CD8-positive, alpha-beta memory T cell (primary cell): ENCODE measurements at regions of chr20 and their contacts with region 1.

Region 1: GRCh38 chr20:52083627-52084232 is 107.8 kb downstream of the ZFP64 start:
- DNase-seq: peak in 4 of 5 donors; percentile 32 to 68 (median 36)
- H3K4me3 ChIP-seq: no peak overlapping the region
- H3K4me3 Mint-ChIP-seq: no peak overlapping the region
- H3K27ac ChIP-seq: no peak overlapping the region
- H3K27ac Mint-ChIP-seq: peak overlapping the region in 3 of 8 donors; percentile 19 to 78 (median 44)
- H3K4me1 ChIP-seq: no peaks in the 10 kb centered on the region
- H3K4me1 Mint-ChIP-seq: peaks cover 19 to 28% (median 24%) of the 10 kb centered on the region in 3 donors
- H3K27me3 ChIP-seq: no peaks in the 10 kb centered on the region
- H3K27me3 Mint-ChIP-seq: no peaks in the 10 kb centered on the region

Region 2: DNA sequence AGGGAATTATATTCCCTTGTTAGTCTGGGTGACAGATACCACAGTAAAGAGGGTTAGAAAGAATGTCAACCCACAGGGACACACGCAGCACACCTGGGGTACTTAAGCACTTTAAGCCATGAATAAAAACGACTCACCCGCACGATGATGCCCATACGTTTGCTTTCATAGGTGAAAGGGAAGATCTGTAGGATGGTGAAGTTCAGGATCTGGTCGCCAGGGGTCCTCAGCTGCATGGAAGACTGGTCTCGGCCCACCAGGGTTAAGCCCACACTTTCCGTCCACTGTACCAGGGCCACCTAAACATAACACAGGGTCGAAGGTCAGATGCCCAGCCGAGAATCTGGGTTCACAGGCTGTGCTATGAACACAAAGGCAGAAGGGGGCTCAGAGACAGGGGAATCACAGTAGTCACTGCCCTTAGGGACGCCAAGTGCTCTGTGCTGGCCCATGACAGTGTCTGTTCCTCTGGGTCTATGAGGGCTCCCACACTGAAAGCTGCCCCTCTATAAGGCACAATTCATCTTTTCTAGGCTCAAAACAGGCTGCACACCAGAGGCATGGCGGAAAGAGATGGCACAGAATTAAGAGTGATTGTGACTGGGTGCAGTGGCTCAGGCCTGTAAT is 444.4 kb before region 1 on chr20:
- CTCF ChIA-PET with region 1: interaction called, 16 read pairs
- POLR2A ChIA-PET with region 1: no interaction called
- DNase-seq: peak in 4 of 5 donors; percentile 21 to 70 (median 44)
- H3K4me3 ChIP-seq: no peak overlapping the region
- H3K4me3 Mint-ChIP-seq: no peak overlapping the region
- H3K27ac ChIP-seq: no peak overlapping the region
- H3K27ac Mint-ChIP-seq: peak overlapping the region in 1 of 8 donors; percentile 20
- H3K4me1 ChIP-seq: no peaks in the 10 kb centered on the region
- H3K4me1 Mint-ChIP-seq: peaks cover 0 to 7% (median 5%) of the 10 kb centered on the region in 3 donors
- H3K27me3 ChIP-seq: no peaks in the 10 kb centered on the region
- H3K27me3 Mint-ChIP-seq: peaks cover 7 to 22% of the 10 kb centered on the region in 2 donors

Region 3: GRCh38 chr20:51800060-51800794 is 283.5 kb before region 1 on chr20:
- CTCF ChIA-PET with region 1: interaction called, 12 read pairs
- POLR2A ChIA-PET with region 1: no interaction called
- DNase-seq: peak; percentile 8 to 72 (median 51)
- H3K4me3 ChIP-seq: no peak overlapping the region
- H3K4me3 Mint-ChIP-seq: peak overlapping the region in 5 of 7 donors; percentile 54 to 75 (median 72)
- H3K27ac ChIP-seq: no peak overlapping the region
- H3K27ac Mint-ChIP-seq: no peak overlapping the region
- H3K4me1 ChIP-seq: peaks cover 8% of the 10 kb centered on the region
- H3K4me1 Mint-ChIP-seq: peaks cover 10 to 25% (median 19%) of the 10 kb centered on the region in 3 donors
- H3K27me3 ChIP-seq: peaks cover 4% of the 10 kb centered on the region
- H3K27me3 Mint-ChIP-seq: peaks cover 42 to 66% of the 10 kb centered on the region in 2 donors

Region 4: GRCh38 chr20:52209154-52209571 is 125.4 kb after region 1 on chr20:
- CTCF ChIA-PET with region 1: no interaction called
- POLR2A ChIA-PET with region 1: no interaction called
- DNase-seq: no peak
- H3K4me3 ChIP-seq: no peak overlapping the region
- H3K4me3 Mint-ChIP-seq: no peak overlapping the region
- H3K27ac ChIP-seq: no peak overlapping the region
- H3K27ac Mint-ChIP-seq: no peak overlapping the region
- H3K4me1 ChIP-seq: no peaks in the 10 kb centered on the region
- H3K4me1 Mint-ChIP-seq: no peaks in the 10 kb centered on the region
- H3K27me3 ChIP-seq: no peaks in the 10 kb centered on the region
- H3K27me3 Mint-ChIP-seq: peaks cover 16 to 49% of the 10 kb centered on the region in 2 donors